ENCODE measurements at regions of chr1 and their contacts with region 1.

Region 1: GRCh38 chr1:112674439-112674985 is at the start of gene MOV10:
- DNase-seq: peak; percentile 75
- ATAC-seq: peak; percentile 80
- H3K4me3 Mint-ChIP-seq: peak within 1 kb of the TSS; percentile 95
- H3K27ac Mint-ChIP-seq: peak within 1 kb of the TSS; percentile 97
- H3K4me1 Mint-ChIP-seq: peaks cover 56% of the 10 kb centered on the region
- H3K27me3 Mint-ChIP-seq: no peaks in the 10 kb centered on the region
- CTCF ChIP-seq: no peak
- total RNA-seq, gene MOV10: 77.2 to 78.5 TPM

Region 2: DNA sequence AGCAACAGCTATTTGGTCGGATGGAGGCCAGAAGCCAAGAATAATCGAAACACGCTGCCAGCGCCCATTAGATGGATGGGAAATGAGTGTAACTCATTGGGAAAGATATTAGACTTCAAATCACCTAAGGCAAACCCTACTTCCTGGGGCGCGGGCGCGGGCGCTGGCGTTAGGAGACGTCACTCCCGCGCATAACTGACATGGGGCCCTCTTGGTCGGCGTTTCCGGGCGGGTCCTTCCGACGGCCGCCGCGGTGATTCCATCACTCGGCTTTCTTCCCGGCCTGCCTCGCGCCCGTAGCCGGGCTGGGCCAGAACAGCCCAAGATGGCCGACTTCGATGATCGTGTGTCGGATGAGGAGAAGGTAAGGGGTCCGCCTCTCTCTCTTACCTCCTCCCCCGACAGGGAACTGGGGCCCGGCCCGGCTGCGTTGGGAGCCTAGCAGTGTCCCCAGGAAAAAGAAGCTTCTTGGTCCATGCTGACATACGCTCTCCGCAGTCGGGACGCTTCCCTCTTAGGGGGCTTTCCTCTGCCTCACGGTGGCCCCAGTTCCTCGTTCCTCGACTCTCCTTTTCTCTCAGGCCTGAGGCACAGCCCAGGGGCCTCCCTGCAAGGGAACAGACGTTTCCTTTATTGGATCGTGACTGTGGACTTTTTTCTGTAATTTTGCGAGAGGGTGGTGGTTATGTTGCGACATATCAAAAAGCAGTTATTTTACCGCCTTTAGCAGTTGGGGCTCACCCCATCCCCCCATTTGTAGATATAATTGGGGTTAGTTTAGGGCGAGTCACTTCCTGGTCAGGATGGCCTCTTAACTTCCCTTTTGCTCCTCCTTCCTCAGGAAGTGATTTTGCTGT is 54.8 kb before region 1 on chr1 and contains the start of gene CAPZA1:
- CTCF ChIA-PET with region 1: interaction called, 3 read pairs
- POLR2A ChIA-PET with region 1: interaction called, 50 read pairs
- intact Hi-C with region 1: loop called (anchors 5 kb)
- DNase-seq: peak; percentile 95
- ATAC-seq: peak; percentile 85
- H3K4me3 Mint-ChIP-seq: peak within 1 kb of the TSS; percentile 99
- H3K27ac Mint-ChIP-seq: peak within 1 kb of the TSS; percentile 100
- H3K4me1 Mint-ChIP-seq: peaks cover 29% of the 10 kb centered on the region
- H3K27me3 Mint-ChIP-seq: no peaks in the 10 kb centered on the region
- CTCF ChIP-seq: no peak
- total RNA-seq, gene CAPZA1: 220 to 230 TPM

Region 3: DNA sequence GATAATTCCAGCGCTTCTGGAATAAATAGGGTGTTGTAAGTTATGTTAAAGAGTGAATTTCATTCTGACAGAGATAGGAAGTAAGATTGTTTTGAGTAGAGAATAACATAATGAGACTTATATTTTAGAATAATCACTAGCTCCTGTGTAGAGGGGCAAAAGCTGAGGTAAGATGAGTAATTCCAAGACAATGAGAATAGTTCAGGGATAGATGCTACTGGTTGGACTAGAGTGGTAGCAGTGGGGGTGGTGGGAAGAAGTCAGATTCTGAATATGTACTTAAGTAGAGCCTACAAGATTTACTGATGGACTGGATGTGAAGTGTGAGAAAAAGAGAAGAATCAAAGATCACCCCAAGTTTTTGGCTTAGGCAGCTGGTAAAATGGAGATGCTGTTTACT is 23.3 kb before region 1 on chr1:
- CTCF ChIA-PET with region 1: interaction called, 3 read pairs
- POLR2A ChIA-PET with region 1: interaction called, 17 read pairs
- intact Hi-C with region 1: no loop called
- DNase-seq: no peak
- ATAC-seq: no peak
- H3K4me3 Mint-ChIP-seq: no peak overlapping the region
- H3K27ac Mint-ChIP-seq: peak overlapping the region; percentile 56
- H3K4me1 Mint-ChIP-seq: peaks cover 27% of the 10 kb centered on the region
- H3K27me3 Mint-ChIP-seq: no peaks in the 10 kb centered on the region
- CTCF ChIP-seq: no peak

Region 4: GRCh38 chr1:112660072-112660471 is 14.4 kb before region 1 on chr1:
- CTCF ChIA-PET with region 1: interaction called, 6 read pairs
- POLR2A ChIA-PET with region 1: interaction called, 41 read pairs
- intact Hi-C with region 1: no loop called
- DNase-seq: no peak
- ATAC-seq: no peak
- H3K4me3 Mint-ChIP-seq: no peak overlapping the region
- H3K27ac Mint-ChIP-seq: no peak overlapping the region
- H3K4me1 Mint-ChIP-seq: peaks cover 4% of the 10 kb centered on the region
- H3K27me3 Mint-ChIP-seq: no peaks in the 10 kb centered on the region
- CTCF ChIP-seq: no peak

Region 5: GRCh38 chr1:112706908-112707663 is 32.6 kb after region 1 on chr1 and contains the start of gene RHOC:
- CTCF ChIA-PET with region 1: interaction called, 19 read pairs
- POLR2A ChIA-PET with region 1: interaction called, 59 read pairs
- intact Hi-C with region 1: loop called (anchors 5 kb)
- DNase-seq: peak; percentile 75
- ATAC-seq: peak; percentile 50
- H3K4me3 Mint-ChIP-seq: peak within 1 kb of the TSS; percentile 71
- H3K27ac Mint-ChIP-seq: no peak within 1 kb of the TSS
- H3K4me1 Mint-ChIP-seq: peaks cover 40% of the 10 kb centered on the region
- H3K27me3 Mint-ChIP-seq: peaks cover 13% of the 10 kb centered on the region
- CTCF ChIP-seq: peak; percentile 89
- total RNA-seq, gene RHOC: 34.2 to 34.7 TPM

Measured in activated CD8-positive, alpha-beta T cell treated with anti-CD3 and anti-CD28 coated beads for 36 hours (primary cell).